A673 (cell line): ENCODE measurements at regions of chr3 and their contacts with region 1.

Region 1: DNA sequence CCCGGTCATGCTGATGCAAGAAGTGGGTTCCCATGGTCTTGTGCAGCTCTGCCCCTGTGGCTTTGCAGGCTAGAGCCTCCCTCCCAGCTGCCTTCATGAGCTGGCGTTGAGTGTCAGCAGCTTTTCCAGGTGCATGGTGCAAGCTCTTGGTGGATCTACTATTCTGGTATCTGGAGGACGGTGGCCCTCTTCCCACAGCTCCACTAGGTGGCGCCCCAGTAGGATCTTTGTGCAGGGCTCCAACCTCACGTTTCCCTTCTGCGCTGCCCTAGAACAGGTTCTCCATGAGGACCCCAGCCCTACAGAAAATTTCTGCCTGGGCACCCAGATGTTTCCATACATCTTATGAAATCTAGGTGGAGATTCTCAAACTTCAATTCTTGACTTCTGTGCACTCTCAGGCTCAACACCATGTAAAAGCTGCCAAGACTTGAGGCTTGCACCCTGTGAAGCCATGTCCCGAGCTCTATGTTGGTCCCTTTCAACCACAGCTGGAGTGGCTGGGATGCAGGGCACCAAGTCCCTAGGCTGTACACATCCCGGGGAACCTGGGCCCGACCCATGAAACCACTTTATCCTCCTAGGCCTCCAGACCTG is 238.4 kb upstream of the MDFIC2 start:
- DNase-seq: peak; percentile 58
- H3K4me3 ChIP-seq: no peak overlapping the region
- H3K27ac ChIP-seq: no peak overlapping the region
- H3K4me1 ChIP-seq: no peaks in the 10 kb centered on the region
- H3K27me3 ChIP-seq: no peaks in the 10 kb centered on the region
- CTCF ChIP-seq: peak; percentile 63

Region 2: DNA sequence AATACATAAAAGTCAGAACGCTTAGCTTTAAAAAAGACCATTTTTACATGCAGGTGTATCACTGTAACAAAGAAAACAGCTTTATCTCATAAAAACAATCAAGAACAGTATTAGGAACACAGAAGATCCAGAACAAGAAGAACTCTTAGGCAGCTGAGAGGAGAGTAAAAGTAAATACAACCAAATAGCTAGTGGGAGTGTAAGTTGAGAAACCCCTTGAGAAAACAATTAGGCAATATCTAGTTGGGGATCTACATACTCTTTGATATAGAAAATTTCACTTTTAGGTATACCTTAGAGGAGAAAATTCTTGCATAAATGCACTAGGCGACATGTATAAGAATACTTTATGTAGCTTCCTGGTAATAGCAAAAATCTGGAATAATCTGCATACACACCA is 1506.2 kb before region 1 on chr3:
- CTCF ChIA-PET with region 1: no interaction called
- POLR2A ChIA-PET with region 1: no interaction called
- intact Hi-C with region 1: no loop called
- DNase-seq: no peak
- H3K4me3 ChIP-seq: no peak overlapping the region
- H3K27ac ChIP-seq: no peak overlapping the region
- H3K4me1 ChIP-seq: no peaks in the 10 kb centered on the region
- H3K27me3 ChIP-seq: no peaks in the 10 kb centered on the region
- CTCF ChIP-seq: no peak

Region 3: DNA sequence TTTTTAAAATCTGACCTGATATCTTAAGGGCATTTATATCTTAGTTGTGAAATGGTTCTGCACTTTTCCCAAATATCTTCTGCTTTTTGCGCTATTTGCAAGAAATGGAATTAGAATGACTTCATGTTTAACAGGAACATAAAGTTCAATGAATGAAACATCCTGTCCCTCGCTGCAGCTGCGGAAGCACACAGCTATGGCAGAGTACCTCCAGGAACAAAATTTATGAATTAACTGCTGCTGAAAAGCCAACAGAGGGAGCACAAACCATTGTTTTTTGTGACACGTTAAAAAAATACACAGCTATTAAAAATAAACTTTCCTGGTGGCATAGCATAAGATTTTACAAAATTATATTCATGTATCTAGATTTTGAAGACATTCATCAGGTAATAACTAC is 166.0 kb after region 1 on chr3:
- CTCF ChIA-PET with region 1: no interaction called
- POLR2A ChIA-PET with region 1: no interaction called
- intact Hi-C with region 1: loop called (anchors 10 kb)
- DNase-seq: peak; percentile 22
- H3K4me3 ChIP-seq: no peak overlapping the region
- H3K27ac ChIP-seq: no peak overlapping the region
- H3K4me1 ChIP-seq: no peaks in the 10 kb centered on the region
- H3K27me3 ChIP-seq: no peaks in the 10 kb centered on the region
- CTCF ChIP-seq: peak; percentile 33; the same call in 1 of the 2 replicates

Region 4: DNA sequence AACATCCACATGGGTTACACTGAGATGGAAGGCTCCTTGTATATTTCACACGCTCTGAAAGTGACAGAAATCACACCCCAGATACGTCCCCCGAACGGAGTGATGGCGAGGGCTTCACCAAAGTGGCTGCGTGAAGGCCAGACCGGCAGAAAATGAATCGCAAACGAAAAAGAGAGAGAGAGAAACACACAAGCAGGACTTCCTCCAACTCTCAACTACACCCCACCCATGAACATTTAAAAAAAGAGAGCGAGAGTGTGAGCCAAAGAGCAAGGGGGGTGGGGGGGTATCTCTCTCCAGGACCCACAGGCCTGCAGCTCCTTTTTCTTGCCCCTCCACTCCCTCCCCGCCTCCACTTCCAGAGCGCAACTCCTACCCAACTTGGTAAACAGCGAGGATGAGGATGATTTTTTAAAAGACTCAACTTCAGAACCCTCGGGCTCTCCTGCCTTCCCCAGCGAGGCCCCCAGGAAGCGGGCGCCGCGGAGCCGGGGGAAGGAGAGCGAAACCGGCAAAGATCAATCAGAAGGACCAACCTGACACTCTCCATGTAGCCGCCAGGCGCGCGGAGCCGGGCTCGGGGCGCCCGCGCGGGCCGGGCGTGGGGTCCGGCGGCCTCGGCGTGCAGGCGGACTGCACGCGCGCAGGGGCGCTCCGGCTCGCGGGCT is 513.6 kb after region 1 on chr3:
- CTCF ChIA-PET with region 1: no interaction called
- POLR2A ChIA-PET with region 1: no interaction called
- intact Hi-C with region 1: loop called (anchors 10 kb)
- DNase-seq: peak; percentile 51
- H3K4me3 ChIP-seq: peak overlapping the region; percentile 59
- H3K27ac ChIP-seq: peak overlapping the region; percentile 68
- H3K4me1 ChIP-seq: peaks cover 57% of the 10 kb centered on the region
- H3K27me3 ChIP-seq: no peaks in the 10 kb centered on the region
- CTCF ChIP-seq: no peak

Region 5: GRCh38 chr3:71305231-71306206 is 754.7 kb after region 1 on chr3:
- CTCF ChIA-PET with region 1: no interaction called
- POLR2A ChIA-PET with region 1: no interaction called
- intact Hi-C with region 1: loop called (anchors 10 kb)
- DNase-seq: peak; percentile 37
- H3K4me3 ChIP-seq: peak overlapping the region; percentile 41
- H3K27ac ChIP-seq: peak overlapping the region; percentile 88
- H3K4me1 ChIP-seq: peaks cover 42% of the 10 kb centered on the region
- H3K27me3 ChIP-seq: no peaks in the 10 kb centered on the region
- CTCF ChIP-seq: no peak